Activated T-helper 1 cell treated with anti-CD3 and anti-CD28 coated beads, Interleukin-12 subunit alpha, Interleukin-12 subunit beta, Interleukin-2, Interleukin-4 antibody, amounts not matched to agents 30 ng/mL and 10 ng/mL and 1 ng/mL, durations not matched to agents 14 hours and 24 hours and 36 hours (primary cell): ENCODE measurements at regions of chr6 and their contacts with region 1.

Region 1: DNA sequence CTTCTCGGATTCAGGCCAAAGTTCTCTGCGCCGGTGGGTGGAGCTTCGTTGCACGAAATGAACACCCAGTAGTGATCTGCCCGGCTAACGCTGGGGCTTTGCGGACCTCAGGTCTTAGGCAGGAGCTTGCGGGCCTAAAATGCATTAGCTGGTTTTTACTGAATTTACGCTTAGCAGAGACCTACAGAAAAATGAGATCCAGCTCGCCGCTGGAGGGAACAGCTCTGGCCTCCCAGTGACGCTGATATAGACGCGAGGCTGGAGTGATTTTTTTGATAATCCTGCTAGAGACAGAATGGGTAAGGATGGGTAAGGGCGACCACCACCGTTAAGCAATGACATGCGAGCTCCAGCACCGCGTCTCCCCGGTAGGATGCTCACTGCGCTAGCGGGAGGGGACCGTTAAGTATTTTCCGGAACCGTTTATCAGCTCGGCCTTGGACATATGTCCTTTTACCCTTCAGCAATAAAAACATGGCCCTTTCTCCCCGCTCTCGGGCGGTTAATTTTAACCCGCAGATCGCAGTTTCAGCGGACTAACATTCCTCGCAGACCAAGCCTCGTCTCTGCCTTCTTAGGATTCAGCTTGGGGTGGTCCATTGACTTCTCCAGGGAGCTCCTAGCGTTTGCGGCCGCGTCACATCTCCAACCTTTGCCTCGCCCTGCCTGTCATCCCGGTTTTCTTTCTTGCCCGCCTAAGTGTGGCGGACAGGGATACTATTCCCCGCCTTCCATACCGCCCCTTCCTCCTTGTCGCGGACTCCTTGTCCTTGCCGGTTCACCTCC is 109.3 kb downstream of the GPX5 start:
- DNase-seq: no peak
- H3K4me3 Mint-ChIP-seq: peak overlapping the region; percentile 37
- H3K27ac Mint-ChIP-seq: peak overlapping the region; percentile 84
- H3K4me1 Mint-ChIP-seq: peaks cover 14% of the 10 kb centered on the region
- H3K27me3 Mint-ChIP-seq: peaks cover 47% of the 10 kb centered on the region

Region 2: GRCh38 chr6:27280064-27280539 is 1354.9 kb before region 1 on chr6:
- intact Hi-C with region 1: loop called (anchors 10 kb)
- DNase-seq: no peak
- H3K4me3 Mint-ChIP-seq: peak overlapping the region; percentile 30
- H3K27ac Mint-ChIP-seq: no peak overlapping the region
- H3K4me1 Mint-ChIP-seq: peaks cover 7% of the 10 kb centered on the region
- H3K27me3 Mint-ChIP-seq: peaks cover 63% of the 10 kb centered on the region

Region 3: GRCh38 chr6:28496099-28496779 is 138.7 kb before region 1 on chr6:
- intact Hi-C with region 1: no loop called
- DNase-seq: no peak
- H3K4me3 Mint-ChIP-seq: no peak overlapping the region
- H3K27ac Mint-ChIP-seq: no peak overlapping the region
- H3K4me1 Mint-ChIP-seq: no peaks in the 10 kb centered on the region
- H3K27me3 Mint-ChIP-seq: peaks cover 22% of the 10 kb centered on the region

Region 4: DNA sequence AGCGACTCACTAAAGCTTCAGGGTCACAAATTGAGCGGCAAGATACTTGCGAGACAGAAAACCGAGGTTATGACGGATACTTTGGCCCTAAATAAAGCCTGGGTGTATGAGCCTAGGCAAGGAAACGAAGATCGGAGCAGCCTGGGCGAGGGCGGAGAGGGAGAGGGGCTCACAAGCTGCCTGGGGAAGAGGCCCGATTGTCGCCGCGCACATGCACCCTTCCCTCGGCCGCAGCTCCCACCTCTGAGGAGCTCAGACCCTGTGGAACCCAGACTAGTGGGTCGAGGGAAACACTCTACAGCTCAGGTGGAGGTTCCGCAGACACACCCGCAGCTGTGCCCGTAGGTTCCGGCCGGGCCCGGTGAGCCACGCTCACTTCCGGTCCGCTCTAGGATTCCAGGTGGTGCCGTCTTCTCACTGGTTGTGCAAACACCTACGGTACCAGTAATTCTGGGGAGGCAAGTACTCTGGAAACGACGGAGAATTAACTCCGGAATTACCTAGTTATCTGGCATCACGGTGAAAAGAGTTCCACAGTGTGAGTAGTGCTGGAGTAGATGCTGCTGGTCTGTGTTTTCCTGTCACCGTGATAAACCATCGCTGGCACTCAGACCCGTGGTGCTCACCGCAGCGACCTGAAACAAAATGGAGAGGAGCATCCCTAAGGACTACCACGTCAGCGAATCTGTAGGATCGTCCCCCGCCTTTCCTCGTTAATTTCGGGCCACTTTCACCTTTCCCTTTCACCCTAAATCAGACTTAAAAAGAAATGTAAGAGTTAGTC is 47.8 kb before region 1 on chr6:
- intact Hi-C with region 1: loop called (anchors 5 kb)
- DNase-seq: peak; percentile 49
- H3K4me3 Mint-ChIP-seq: peak overlapping the region; percentile 83
- H3K27ac Mint-ChIP-seq: no peak overlapping the region
- H3K4me1 Mint-ChIP-seq: peaks cover 43% of the 10 kb centered on the region
- H3K27me3 Mint-ChIP-seq: peaks cover 53% of the 10 kb centered on the region

Region 5: GRCh38 chr6:28683944-28684538 is 49.1 kb after region 1 on chr6:
- intact Hi-C with region 1: loop called (anchors 5 kb)
- DNase-seq: no peak
- H3K4me3 Mint-ChIP-seq: no peak overlapping the region
- H3K27ac Mint-ChIP-seq: no peak overlapping the region
- H3K4me1 Mint-ChIP-seq: peaks cover 19% of the 10 kb centered on the region
- H3K27me3 Mint-ChIP-seq: peaks cover 65% of the 10 kb centered on the region

Region 6: DNA sequence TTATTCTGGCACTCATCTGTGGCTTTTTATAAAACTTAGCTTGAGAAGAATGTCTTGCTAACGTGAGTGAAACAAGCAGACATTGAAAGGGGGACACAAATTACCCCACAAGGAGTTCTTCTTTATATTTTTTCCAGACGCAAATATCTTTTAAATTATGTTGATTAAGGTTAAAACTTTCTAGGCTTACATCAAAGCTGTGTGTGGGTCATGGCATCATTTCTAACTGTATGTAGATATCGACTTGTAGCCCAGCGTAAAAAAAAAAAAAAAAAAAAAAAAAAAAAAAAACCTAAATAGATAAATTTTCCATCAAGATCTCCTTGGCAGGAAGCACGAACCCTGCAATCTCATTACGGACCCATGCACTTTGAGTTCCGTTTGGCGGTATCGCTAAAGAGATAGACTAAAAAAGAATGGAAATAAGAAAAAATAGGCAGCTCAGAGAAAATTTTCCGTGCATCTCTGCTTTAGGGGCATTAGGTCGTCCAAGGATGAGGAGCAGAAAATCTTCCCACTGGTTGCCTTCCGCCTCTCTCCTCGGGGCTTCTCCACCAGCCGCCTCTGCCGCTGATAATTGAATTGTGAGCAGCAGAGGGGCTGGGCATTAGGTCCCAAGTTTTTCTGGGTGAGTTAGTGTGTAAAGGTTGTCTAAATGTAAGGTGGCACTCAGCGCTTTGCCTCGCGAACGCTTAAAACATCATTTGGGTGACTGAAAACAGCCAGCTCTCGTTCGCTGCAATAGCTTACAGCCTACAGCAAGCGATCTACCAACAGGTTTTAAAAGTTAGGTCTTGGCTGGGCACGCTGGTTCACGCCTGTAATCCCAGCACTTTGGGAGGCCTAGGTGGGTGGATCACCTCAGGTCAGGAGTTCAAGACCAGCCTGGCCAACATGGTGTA is 94.8 kb after region 1 on chr6:
- intact Hi-C with region 1: loop called (anchors 10 kb)
- DNase-seq: no peak
- H3K4me3 Mint-ChIP-seq: peak overlapping the region; percentile 86
- H3K27ac Mint-ChIP-seq: peak overlapping the region; percentile 76
- H3K4me1 Mint-ChIP-seq: peaks cover 22% of the 10 kb centered on the region
- H3K27me3 Mint-ChIP-seq: peaks cover 73% of the 10 kb centered on the region

Region 7: GRCh38 chr6:28816909-28817807 is 182.2 kb after region 1 on chr6:
- intact Hi-C with region 1: loop called (anchors 10 kb)
- DNase-seq: no peak
- H3K4me3 Mint-ChIP-seq: no peak overlapping the region
- H3K27ac Mint-ChIP-seq: no peak overlapping the region
- H3K4me1 Mint-ChIP-seq: peaks cover 11% of the 10 kb centered on the region
- H3K27me3 Mint-ChIP-seq: peaks cover 70% of the 10 kb centered on the region

Region 8: GRCh38 chr6:28895134-28895812 is 260.3 kb after region 1 on chr6:
- intact Hi-C with region 1: no loop called
- DNase-seq: peak; percentile 89
- H3K4me3 Mint-ChIP-seq: peak overlapping the region; percentile 90
- H3K27ac Mint-ChIP-seq: peak overlapping the region; percentile 100
- H3K4me1 Mint-ChIP-seq: peaks cover 25% of the 10 kb centered on the region
- H3K27me3 Mint-ChIP-seq: peaks cover 6% of the 10 kb centered on the region